Mucosa of descending colon (tissue), 3 donors: ENCODE measurements at regions of chr5 and their contacts with region 1.

Region 1: GRCh38 chr5:142720641-142721271 is 34.9 kb upstream of the FGF1 start:
- DNase-seq: peak; percentile 67 to 77 (median 72)
- ATAC-seq: peak; percentile 89
- H3K4me3 ChIP-seq: no peak overlapping the region
- H3K4me1 ChIP-seq: no peaks in the 10 kb centered on the region
- CTCF ChIP-seq: no peak

Region 2: DNA sequence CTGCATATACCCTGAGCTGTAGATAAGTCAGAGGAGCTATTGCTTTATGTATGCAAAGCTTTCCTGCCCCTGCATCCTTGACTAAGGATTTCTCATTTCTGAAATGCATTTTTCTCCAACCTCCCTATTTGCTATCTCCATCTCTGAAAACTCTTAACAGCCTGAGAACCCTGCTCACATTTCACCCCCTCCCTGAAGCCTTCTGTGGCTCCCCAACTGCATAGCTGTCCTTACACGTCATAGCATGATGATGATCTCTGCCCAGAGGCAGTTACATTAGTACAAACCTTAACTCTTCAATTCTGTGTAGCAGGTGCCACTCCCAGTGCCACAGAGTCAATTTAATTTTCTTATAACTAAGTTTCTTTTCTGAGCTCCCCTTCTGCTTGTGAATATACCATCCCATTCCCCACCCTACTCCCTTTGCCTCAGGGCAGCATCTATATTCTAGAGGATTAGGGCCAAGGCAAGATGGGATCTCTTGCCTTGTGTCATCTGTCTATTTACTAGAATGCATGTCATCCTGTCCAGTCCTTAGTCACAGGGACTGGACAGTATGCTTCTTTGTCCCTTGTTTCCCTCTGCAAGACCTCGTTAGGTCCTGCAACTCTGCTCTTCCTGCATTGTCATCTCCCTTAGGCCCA is 246.2 kb before region 1 on chr5:
- intact Hi-C with region 1: no loop called
- DNase-seq: no peak
- ATAC-seq: no peak
- H3K4me3 ChIP-seq: no peak overlapping the region
- H3K4me1 ChIP-seq: no peaks in the 10 kb centered on the region
- CTCF ChIP-seq: no peak

Region 3: DNA sequence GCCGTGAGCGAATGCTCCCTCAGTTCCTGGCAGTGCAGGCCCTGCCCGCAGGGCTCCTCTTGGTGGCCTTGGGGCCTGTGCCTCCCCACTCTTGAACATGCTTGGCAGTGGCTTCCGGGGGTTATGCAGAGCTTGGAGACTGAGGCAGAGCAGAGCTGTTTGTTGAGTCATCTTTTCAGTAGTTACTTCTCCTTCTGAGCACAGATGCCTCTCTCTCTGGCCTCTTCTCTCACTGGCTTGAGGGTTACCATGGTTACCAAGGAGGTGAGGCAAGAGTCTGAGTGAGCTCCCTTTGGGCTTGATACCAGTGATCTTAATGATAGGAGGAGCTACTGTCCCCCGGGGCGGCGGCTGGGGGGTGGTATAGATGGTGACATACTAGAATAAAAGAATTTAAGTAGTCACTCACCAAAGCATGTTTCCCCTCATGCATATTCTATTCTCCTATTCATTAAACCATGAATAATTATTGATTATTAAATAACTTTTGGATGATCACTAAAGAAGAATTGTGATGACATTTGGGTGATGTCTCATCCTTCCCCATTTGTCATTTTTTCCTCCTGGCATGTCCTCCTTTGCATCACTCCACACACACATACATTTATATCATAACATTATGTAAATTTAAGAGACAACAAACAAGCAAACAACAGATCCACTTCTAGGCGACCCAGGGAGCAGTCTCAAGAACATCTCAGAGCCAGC is 160.5 kb after region 1 on chr5:
- intact Hi-C with region 1: loop called (anchors 5 to 10 kb)
- DNase-seq: no peak
- ATAC-seq: peak; percentile 26
- H3K4me3 ChIP-seq: no peak overlapping the region
- H3K4me1 ChIP-seq: no peaks in the 10 kb centered on the region
- CTCF ChIP-seq: no peak

Region 4: DNA sequence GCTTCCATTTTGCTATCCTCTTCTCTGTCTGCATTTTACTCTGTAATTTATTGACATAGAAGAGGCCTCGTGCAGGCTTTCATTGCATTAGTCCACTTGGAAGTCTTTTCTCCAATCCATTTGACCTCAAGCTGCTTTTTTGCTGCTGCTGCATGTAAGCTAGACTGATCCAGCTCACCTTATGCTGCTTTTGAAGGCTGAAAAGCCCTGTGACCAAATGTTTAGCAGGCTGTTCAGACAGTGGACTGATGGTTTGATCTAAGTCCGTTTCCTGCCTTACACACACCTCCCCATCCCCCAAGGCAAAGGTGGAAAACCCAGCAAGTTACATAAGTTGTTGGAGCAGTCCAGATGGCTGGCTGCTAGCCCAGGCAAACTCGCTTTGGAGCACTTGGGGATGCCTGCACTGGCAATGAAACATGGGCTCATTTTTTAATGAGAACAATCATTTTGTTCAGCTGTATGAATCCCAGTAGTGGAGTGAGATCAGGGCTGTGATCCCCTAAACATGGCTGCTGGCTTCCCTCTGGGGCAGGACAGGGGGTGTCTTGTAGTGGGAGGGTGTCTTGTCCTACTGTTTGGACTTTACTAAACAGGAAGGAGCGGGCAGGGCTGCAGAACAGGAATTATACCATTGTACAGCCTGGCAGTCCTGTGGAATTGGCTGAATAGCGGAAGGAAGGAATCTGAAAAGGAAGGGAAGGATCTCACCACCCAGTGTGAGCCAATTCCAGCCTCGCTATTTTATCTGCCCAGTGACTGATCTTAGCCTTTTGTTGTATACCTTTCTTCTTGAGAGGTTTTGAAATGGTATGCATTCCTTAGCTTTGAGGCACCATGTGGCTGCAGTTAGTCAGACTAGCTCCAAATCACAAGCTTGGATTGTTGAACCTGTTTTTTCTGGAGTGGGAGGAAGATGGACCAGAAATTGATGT is 261.4 kb after region 1 on chr5:
- intact Hi-C with region 1: no loop called
- DNase-seq: peak; percentile 76 to 89 (median 77)
- ATAC-seq: peak; percentile 89
- H3K4me3 ChIP-seq: no peak overlapping the region
- H3K4me1 ChIP-seq: peaks cover 24% of the 10 kb centered on the region
- CTCF ChIP-seq: no peak